ENCODE measurements at regions of chr7 and their contacts with region 1.

Region 1: DNA sequence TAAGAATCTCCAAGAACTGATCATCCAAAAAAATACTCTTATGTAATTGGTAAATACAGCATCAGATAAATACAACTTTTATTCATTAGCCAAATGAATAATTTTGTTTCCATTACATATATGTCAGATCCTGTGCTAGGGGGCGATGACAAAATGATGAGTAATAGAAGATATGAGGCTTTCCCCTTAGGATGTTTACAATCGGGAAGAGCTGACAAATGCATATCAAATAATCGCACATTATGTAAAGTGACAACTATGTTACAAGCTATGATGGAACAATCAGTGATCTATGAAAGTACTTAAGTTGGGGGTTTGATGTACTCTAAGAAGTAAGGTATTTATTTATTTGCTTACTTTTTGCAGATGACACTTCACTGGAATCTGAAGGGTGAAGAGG is 465.6 kb upstream of the VSTM2A start:
- DNase-seq: no peak
- ATAC-seq: no peak
- H3K4me3 Mint-ChIP-seq: no peak overlapping the region
- H3K27ac Mint-ChIP-seq: no peak overlapping the region
- H3K4me1 Mint-ChIP-seq: no peaks in the 10 kb centered on the region
- H3K27me3 Mint-ChIP-seq: no peaks in the 10 kb centered on the region
- CTCF ChIP-seq: no peak

Region 2: GRCh38 chr7:54097886-54098285 is 21.3 kb after region 1 on chr7:
- CTCF ChIA-PET with region 1: no interaction called
- POLR2A ChIA-PET with region 1: no interaction called
- intact Hi-C with region 1: loop called (anchors 2 kb)
- DNase-seq: no peak
- ATAC-seq: no peak
- H3K4me3 Mint-ChIP-seq: no peak overlapping the region
- H3K27ac Mint-ChIP-seq: no peak overlapping the region
- H3K4me1 Mint-ChIP-seq: no peaks in the 10 kb centered on the region
- H3K27me3 Mint-ChIP-seq: no peaks in the 10 kb centered on the region
- CTCF ChIP-seq: no peak

Region 3: DNA sequence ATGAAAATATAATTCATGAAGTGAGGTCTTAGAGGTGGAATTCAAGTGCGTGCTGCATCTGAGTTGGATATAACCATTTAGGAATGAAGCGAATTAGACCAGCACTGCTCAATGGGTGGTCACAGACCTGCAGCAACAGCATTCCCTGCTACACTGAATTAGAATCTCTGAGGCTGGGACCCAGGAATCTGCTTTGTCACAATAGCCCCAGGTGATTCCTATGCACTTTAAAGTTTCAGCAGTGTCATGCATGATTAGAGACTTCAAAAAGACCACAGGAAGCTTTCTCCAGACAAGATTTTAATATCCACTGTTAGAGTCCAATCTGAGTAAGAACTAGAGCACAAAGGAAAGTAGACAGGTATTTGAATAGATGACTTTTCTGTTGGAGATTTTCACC is 112.7 kb after region 1 on chr7:
- CTCF ChIA-PET with region 1: no interaction called
- POLR2A ChIA-PET with region 1: no interaction called
- intact Hi-C with region 1: loop called (anchors 10 kb)
- DNase-seq: no peak
- ATAC-seq: no peak
- H3K4me3 Mint-ChIP-seq: no peak overlapping the region
- H3K27ac Mint-ChIP-seq: no peak overlapping the region
- H3K4me1 Mint-ChIP-seq: no peaks in the 10 kb centered on the region
- H3K27me3 Mint-ChIP-seq: no peaks in the 10 kb centered on the region
- CTCF ChIP-seq: no peak

Measured in activated B cell treated with CpG ODN at 0.5 μM for 24 hours (primary cell).